ENCODE measurements at regions of chr2 and their contacts with region 1.

Region 1: GRCh38 chr2:168948621-168949212 is 47.6 kb downstream of the G6PC2 start:
- DNase-seq: no peak
- H3K4me3 ChIP-seq: no peak overlapping the region
- H3K27ac ChIP-seq: no peak overlapping the region
- H3K27me3 ChIP-seq: no peaks in the 10 kb centered on the region
- CTCF ChIP-seq: peak; percentile 64

Region 2: DNA sequence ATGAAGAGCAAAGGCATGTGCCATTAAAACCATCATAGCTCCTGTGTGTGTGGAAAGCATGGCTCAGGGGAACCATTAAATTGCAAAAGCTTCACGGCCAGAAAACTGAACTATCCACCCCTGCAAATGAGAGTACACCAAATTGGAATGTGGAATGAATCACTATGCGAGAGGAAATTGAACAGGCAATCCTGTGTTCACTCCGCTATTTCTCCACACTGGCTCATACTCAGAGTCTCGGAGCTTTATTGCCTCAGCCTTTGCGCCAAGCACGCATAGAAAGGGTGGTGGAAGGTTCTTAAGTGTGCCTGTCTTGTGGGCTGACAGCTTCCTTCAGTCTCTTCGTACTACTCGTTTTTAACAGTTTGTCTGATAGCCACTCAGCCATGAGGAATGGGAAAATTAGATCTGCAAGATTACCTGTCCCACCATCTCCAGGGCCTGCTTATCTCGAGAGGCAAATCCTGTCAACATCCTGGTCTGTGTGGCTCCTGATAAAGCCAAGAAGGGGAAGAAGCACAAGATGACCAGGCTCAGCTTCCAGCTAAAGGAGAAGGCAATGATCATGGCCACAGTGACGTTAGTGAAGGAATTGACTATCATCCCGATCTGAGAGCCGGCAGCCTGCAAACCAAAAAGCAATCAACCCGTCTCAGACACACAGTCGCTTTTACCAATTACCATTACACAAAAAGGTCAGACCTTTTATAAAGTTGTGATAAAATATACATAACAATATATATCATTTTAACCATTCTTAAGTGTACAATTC is 12.7 kb before region 1 on chr2:
- CTCF ChIA-PET with region 1: interaction called, 13 read pairs
- POLR2A ChIA-PET with region 1: no interaction called
- DNase-seq: no peak
- H3K4me3 ChIP-seq: no peak overlapping the region
- H3K27ac ChIP-seq: no peak overlapping the region
- H3K27me3 ChIP-seq: peaks cover 2% of the 10 kb centered on the region
- CTCF ChIP-seq: no peak

Region 3: DNA sequence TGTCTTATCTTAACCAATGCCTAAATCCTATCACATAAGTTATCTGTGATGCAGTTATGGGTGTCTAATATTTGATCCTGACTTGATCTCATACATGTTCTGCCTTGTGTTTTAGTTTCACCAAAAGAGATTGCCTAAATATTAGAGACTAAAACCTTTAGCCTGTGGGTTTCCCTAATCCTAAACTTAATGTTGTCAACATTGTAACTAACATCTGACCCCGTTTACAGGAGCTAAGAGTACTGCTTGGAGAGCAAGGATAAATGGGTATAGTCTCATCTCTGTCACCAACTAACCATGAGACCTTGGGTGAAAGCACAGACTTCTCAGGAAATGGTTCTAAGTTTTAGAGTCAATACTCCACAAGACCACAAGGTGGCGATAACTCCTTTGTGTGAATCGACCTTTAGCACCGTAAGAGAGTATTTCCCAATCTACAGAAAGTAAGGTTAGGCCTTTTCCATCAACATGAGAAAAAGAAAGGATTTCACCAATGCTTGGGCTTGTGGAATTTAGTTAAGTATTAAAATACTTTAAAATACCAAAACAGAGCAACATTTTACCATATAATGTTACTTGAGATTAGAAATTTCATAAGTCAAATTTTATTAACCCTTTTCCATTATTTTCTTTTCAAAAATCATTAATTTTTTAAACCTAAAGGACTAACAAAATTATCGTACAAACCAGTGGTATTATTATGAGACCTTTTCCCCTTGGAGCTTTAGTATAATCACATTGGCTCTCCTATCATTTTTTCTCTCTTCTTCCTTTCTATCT is 12.9 kb after region 1 on chr2:
- CTCF ChIA-PET with region 1: interaction called, 10 read pairs
- POLR2A ChIA-PET with region 1: no interaction called
- DNase-seq: peak; percentile 46
- H3K4me3 ChIP-seq: no peak overlapping the region
- H3K27ac ChIP-seq: no peak overlapping the region
- H3K27me3 ChIP-seq: no peaks in the 10 kb centered on the region
- CTCF ChIP-seq: peak; percentile 82

Region 4: DNA sequence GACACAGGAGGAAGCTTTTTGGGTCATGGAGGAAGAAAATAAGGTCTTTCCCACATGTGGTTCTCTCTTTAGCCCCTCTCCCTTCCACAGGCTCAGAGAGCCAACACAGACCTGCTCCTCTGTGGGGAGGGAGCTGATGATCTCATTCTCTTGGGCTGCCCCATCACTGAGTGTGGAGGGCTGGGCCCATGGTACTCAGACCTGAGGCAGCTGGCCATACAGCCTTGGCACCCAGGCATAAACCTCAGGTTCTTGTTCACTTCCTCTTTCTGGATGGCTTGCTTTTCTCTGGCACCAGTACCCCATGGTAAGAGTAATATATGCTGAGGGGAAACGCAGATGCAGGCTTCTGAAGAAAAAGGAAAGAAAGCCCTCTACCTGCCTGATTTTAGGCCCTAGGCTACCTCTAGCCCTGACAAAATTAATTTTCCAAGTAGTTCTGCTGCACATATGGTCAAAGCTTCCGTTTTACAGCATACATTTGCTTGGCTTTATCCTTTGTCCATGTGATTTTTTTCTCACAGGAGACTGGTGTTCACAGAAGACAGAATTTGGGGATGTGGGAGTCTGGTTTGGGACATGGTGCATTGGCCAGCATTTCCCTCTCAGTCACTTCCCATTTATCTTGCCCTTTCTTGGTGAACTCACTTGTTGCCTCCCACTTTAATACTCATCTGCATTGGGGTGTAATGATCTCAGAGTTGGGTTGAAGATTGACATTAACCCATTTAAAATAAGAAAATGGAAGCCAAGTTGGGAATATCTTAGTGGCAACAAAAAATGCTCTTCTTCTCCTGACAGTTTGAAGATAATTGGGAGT is 131.7 kb after region 1 on chr2:
- CTCF ChIA-PET with region 1: no interaction called
- POLR2A ChIA-PET with region 1: no interaction called
- DNase-seq: no peak
- H3K4me3 ChIP-seq: no peak overlapping the region
- H3K27ac ChIP-seq: no peak overlapping the region
- H3K27me3 ChIP-seq: no peaks in the 10 kb centered on the region
- CTCF ChIP-seq: no peak